Naive thymus-derived CD8-positive, alpha-beta T cell (primary cell): ENCODE measurements at regions of chr9 and their contacts with region 1.

Region 1: DNA sequence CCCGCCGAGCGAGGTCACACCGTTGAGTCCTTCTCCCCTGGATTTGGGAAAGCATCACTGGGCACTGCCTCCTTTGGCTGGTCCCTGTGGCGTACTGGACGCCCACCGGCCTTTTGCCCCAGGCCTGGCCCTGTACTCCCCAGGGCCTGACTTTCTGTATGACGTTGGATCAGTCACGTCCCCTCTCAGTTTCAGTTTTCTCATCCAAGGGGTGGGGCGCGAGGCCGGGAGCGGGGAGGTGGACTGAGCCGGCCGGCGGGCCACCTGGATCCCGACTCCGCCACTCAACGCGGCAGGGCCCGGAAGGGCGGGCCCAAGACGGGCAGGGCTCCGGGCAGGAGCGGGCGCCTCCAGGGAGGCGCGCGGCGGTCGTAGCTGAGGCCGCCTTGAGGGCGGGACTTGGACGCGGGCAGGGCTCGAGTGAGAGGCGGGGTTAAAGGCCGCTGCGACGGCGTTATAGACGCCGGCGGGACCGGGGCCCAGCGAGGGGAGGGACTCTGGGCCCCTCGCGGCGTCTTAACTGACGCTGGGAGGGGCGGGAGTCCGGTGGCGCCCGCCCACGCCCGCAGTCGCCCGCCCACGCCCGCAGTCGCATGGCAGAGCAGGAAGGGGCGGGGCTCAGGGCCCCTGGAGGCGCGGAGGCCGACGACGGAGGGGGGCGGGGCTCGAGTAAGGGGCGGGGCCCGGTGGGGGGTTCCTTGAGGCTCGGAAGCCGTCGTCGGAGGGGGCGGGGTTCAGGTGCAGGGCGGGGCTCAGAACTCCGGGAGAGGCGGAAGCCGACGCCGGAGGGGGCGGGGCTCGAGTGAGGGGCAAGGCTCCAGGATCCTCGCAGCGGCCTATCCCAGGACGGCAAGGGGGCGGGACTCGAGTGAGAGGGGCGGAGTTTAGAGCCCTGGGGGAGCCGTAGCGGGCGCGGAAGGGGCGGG is 549 bp upstream of the CARD19 start:
- DNase-seq: peak; percentile 98 to 100 (median 100)
- ATAC-seq: peak; percentile 78 to 82
- H3K4me3 Mint-ChIP-seq: peak overlapping the region; percentile 73 to 91 (median 87)
- H3K27ac Mint-ChIP-seq: peak overlapping the region; percentile 91 to 98 (median 97)
- H3K4me1 Mint-ChIP-seq: peaks cover 44 to 81% (median 75%) of the 10 kb centered on the region in 4 donors
- H3K27me3 Mint-ChIP-seq: no peaks in the 10 kb centered on the region

Region 2: DNA sequence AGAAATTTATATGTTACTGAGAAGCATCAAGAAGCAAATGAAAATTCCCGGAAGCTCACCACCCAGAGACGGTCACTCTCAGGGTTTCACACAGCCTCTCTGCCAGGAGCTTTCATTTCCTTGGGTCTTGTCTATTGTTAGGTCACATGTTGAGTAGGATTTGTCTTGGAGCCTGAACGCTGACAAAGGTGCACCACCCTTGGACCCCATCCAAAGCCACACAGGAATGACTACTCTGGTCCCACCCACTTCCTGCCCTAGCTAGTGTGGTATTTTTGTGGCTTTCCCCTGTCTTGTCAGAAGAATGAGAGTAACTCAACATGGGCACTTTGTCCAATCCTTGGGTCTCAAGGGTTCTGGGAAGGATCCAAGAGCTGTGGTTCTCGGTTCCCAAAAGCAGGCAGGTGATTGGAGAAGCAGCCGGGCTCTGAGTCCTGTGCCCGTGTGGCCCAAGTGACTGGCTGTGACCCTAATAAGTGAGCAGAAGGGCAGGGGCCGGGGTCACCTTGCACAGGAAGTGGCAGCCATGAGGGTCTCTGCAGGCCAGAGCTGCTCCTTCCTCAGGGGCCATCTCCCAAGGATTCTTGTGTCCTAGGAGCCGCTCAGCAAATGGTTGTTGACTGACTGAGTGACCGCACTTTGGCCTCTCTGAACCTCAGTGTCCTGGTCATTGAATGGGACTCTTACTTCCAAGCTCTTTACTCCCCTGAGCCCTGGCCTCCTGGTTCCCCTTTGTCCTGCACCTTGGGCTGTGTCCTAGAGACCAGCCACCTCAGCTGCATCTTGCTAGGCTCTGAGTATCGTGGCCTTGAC is 141.2 kb before region 1 on chr9:
- POLR2A ChIA-PET with region 1: interaction called, 13 read pairs
- DNase-seq: peak; percentile 52 to 92 (median 82)
- ATAC-seq: peak; percentile 87 to 95
- H3K4me3 Mint-ChIP-seq: peak overlapping the region; percentile 74 to 93 (median 87)
- H3K27ac Mint-ChIP-seq: peak overlapping the region; percentile 82 to 99 (median 98)
- H3K4me1 Mint-ChIP-seq: peaks cover 34 to 87% (median 79%) of the 10 kb centered on the region in 4 donors
- H3K27me3 Mint-ChIP-seq: no peaks in the 10 kb centered on the region

Region 3: GRCh38 chr9:93051680-93052089 is 43.8 kb before region 1 on chr9:
- POLR2A ChIA-PET with region 1: interaction called, 33 read pairs
- DNase-seq: peak in 1 of 10 donors; percentile 45
- ATAC-seq: no peak
- H3K4me3 Mint-ChIP-seq: peak overlapping the region in 1 of 10 donors; percentile 10
- H3K27ac Mint-ChIP-seq: peak overlapping the region in 5 of 10 donors; percentile 22 to 87 (median 54)
- H3K4me1 Mint-ChIP-seq: peaks cover 38 to 68% (median 47%) of the 10 kb centered on the region in 4 donors
- H3K27me3 Mint-ChIP-seq: peaks cover 0 to 1% (median 0%) of the 10 kb centered on the region in 5 donors

Region 4: GRCh38 chr9:93058355-93059096 is 36.9 kb before region 1 on chr9 and contains the start of gene SUSD3:
- POLR2A ChIA-PET with region 1: interaction called, 221 read pairs
- DNase-seq: peak; percentile 57 to 80 (median 62)
- ATAC-seq: peak; percentile 57 to 63
- H3K4me3 Mint-ChIP-seq: peak within 1 kb of the TSS; percentile 85 to 96 (median 92)
- H3K27ac Mint-ChIP-seq: peak within 1 kb of the TSS; percentile 93 to 100 (median 100)
- H3K4me1 Mint-ChIP-seq: peaks cover 37 to 80% (median 73%) of the 10 kb centered on the region in 4 donors
- H3K27me3 Mint-ChIP-seq: no peaks in the 10 kb centered on the region
- polyA plus RNA-seq, gene SUSD3: 86.7 to 208 (median 145) TPM

Region 5: DNA sequence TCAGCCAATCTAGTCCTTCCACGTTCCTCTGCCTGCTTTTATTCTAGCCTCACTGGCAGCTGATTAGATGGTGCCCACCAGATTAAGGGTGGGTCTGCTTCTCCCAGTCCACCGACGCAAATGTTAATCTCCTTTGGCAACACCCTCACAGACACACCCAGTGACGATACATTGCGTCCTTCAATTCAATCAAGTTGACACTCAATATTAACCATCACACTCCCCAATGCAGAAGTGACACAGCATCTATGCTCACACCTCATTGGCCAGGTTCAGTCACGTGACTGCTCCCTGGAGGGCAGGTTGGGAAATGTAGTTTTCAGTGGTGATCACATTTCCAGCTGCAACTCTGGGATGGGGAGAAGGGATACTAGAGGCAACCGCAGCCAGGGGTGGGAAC is 24.0 kb before region 1 on chr9:
- POLR2A ChIA-PET with region 1: interaction called, 221 read pairs
- DNase-seq: no peak
- ATAC-seq: peak in 1 of 2 donors; percentile 36
- H3K4me3 Mint-ChIP-seq: peak overlapping the region in 3 of 10 donors; percentile 15 to 37 (median 29)
- H3K27ac Mint-ChIP-seq: peak overlapping the region in 8 of 10 donors; percentile 28 to 93 (median 86)
- H3K4me1 Mint-ChIP-seq: peaks cover 28 to 90% (median 75%) of the 10 kb centered on the region in 4 donors
- H3K27me3 Mint-ChIP-seq: no peaks in the 10 kb centered on the region

Region 6: GRCh38 chr9:93082841-93083411 is 12.5 kb before region 1 on chr9:
- POLR2A ChIA-PET with region 1: interaction called, 38 read pairs
- DNase-seq: peak in 1 of 10 donors; percentile 61
- ATAC-seq: peak; percentile 47 to 53
- H3K4me3 Mint-ChIP-seq: peak overlapping the region in 5 of 10 donors; percentile 10 to 81 (median 41)
- H3K27ac Mint-ChIP-seq: peak overlapping the region; percentile 46 to 96 (median 90)
- H3K4me1 Mint-ChIP-seq: peaks cover 9 to 43% (median 21%) of the 10 kb centered on the region in 4 donors
- H3K27me3 Mint-ChIP-seq: no peaks in the 10 kb centered on the region

Region 7: GRCh38 chr9:93151096-93151784 is 55.8 kb after region 1 on chr9:
- POLR2A ChIA-PET with region 1: no interaction called
- DNase-seq: no peak
- ATAC-seq: no peak
- H3K4me3 Mint-ChIP-seq: no peak overlapping the region
- H3K27ac Mint-ChIP-seq: no peak overlapping the region
- H3K4me1 Mint-ChIP-seq: peaks cover 1 to 23% (median 11%) of the 10 kb centered on the region in 4 donors
- H3K27me3 Mint-ChIP-seq: no peaks in the 10 kb centered on the region